PC-9 (cell line): ENCODE measurements at regions of chr9 and their contacts with region 1.

Region 1: GRCh38 chr9:114397848-114398605 is 10.2 kb upstream of the AKNA start:
- DNase-seq: peak; percentile 54 to 97
- H3K4me3 ChIP-seq: peak overlapping the region; percentile 80
- H3K27ac ChIP-seq: no peak overlapping the region
- H3K4me1 ChIP-seq: peaks cover 10% of the 10 kb centered on the region
- H3K27me3 ChIP-seq: no peaks in the 10 kb centered on the region
- CTCF ChIP-seq: no peak

Region 2: GRCh38 chr9:114348906-114349482 is 49.0 kb before region 1 on chr9:
- CTCF ChIA-PET with region 1: no interaction called
- POLR2A ChIA-PET with region 1: no interaction called
- intact Hi-C with region 1: loop called (anchors 5 kb)
- DNase-seq: peak; percentile 79 to 91
- H3K4me3 ChIP-seq: no peak overlapping the region
- H3K27ac ChIP-seq: peak overlapping the region; percentile 83
- H3K4me1 ChIP-seq: peaks cover 15% of the 10 kb centered on the region
- H3K27me3 ChIP-seq: no peaks in the 10 kb centered on the region
- CTCF ChIP-seq: no peak

Region 3: DNA sequence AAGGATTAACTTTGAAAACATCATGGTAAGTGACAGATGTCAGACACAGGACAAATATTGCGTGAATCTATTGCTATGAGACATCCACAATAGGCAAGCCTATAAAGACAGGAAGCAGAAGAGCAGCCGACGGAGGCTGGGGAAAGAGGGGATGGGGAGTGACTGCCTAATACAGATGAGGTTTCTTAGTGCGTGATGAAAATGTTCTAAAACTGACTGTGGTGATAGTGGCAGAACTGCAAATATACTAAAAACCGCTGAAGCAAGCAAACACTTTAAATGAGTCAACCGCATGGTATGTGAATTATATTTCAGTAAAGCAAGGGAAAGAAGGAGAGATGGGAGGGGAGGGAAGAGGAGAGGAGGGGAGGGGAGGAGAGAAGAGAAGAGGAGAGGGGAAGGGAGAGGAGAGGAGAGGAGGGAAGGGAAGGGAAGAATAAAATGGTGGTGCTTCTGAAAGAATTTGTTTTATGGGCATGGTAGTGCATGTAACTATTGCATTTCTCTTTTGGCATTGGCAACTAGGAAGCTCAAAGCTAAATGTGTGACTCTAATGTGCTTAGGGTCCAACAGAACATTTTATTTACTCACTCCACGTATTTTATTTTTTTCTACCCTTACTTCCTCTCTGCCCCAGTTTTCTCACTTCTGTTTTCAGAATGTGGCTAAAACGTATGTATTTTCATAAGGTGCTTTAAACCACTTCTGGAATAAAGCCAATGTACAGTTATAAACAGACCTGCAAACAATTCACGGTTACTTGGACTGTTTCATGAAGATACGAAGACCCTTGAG is 31.5 kb before region 1 on chr9:
- CTCF ChIA-PET with region 1: no interaction called
- POLR2A ChIA-PET with region 1: no interaction called
- intact Hi-C with region 1: loop called (anchors 1 kb)
- DNase-seq: peak in 1 of 2 experiments; percentile 68
- H3K4me3 ChIP-seq: no peak overlapping the region
- H3K27ac ChIP-seq: peak overlapping the region; percentile 12; the same call in 1 of the 2 replicates
- H3K4me1 ChIP-seq: peaks cover 38% of the 10 kb centered on the region
- H3K27me3 ChIP-seq: no peaks in the 10 kb centered on the region
- CTCF ChIP-seq: no peak